Activated CD4-positive, alpha-beta T cell treated with anti-CD3 and anti-CD28 coated beads for 36 hours (primary cell): ENCODE measurements at regions of chr7 and their contacts with region 1.

Region 1: DNA sequence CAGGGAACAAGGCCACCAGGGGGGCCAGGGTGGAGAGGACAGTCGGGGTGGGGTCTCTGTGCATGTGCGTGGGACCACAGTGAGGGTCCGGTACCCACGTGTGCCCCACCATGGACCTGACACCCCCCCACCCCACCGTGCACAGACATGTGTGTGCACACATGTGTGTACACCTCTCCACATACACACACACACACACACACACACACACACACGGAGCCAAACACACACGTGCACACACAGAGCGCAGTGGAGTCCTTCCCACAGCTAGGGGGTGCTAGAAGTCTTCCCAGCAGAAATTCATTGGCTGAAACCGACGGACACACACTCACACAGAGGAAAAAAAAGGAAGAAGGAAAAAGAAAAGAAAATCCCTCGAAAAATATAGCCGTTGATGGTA is 42.8 kb upstream of the GNA12 start:
- DNase-seq: peak; percentile 81
- ATAC-seq: peak; percentile 91
- H3K4me3 Mint-ChIP-seq: no peak overlapping the region
- H3K27ac Mint-ChIP-seq: no peak overlapping the region
- H3K4me1 Mint-ChIP-seq: peaks cover 4% of the 10 kb centered on the region
- H3K27me3 Mint-ChIP-seq: no peaks in the 10 kb centered on the region

Region 2: GRCh38 chr7:3073763-3074458 is 187.0 kb after region 1 on chr7:
- CTCF ChIA-PET with region 1: no interaction called
- POLR2A ChIA-PET with region 1: no interaction called
- intact Hi-C with region 1: loop called in 1 of 2 experiments (anchors 5 kb)
- DNase-seq: no peak
- ATAC-seq: no peak
- H3K4me3 Mint-ChIP-seq: no peak overlapping the region
- H3K27ac Mint-ChIP-seq: no peak overlapping the region
- H3K4me1 Mint-ChIP-seq: peaks cover 16% of the 10 kb centered on the region
- H3K27me3 Mint-ChIP-seq: no peaks in the 10 kb centered on the region

Region 3: GRCh38 chr7:3154912-3155494 is 268.1 kb after region 1 on chr7:
- CTCF ChIA-PET with region 1: interaction called, 4 read pairs
- POLR2A ChIA-PET with region 1: no interaction called
- intact Hi-C with region 1: loop called (anchors 1 kb)
- DNase-seq: peak; percentile 80
- ATAC-seq: peak; percentile 72
- H3K4me3 Mint-ChIP-seq: no peak overlapping the region
- H3K27ac Mint-ChIP-seq: no peak overlapping the region
- H3K4me1 Mint-ChIP-seq: peaks cover 26% of the 10 kb centered on the region
- H3K27me3 Mint-ChIP-seq: peaks cover 2% of the 10 kb centered on the region

Region 4: GRCh38 chr7:3200504-3200903 is 313.6 kb after region 1 on chr7:
- CTCF ChIA-PET with region 1: no interaction called
- POLR2A ChIA-PET with region 1: no interaction called
- intact Hi-C with region 1: loop called in 1 of 2 experiments (anchors 1 kb)
- DNase-seq: peak; percentile 63
- ATAC-seq: peak; percentile 58
- H3K4me3 Mint-ChIP-seq: no peak overlapping the region
- H3K27ac Mint-ChIP-seq: no peak overlapping the region
- H3K4me1 Mint-ChIP-seq: no peaks in the 10 kb centered on the region
- H3K27me3 Mint-ChIP-seq: peaks cover 6% of the 10 kb centered on the region

Region 5: DNA sequence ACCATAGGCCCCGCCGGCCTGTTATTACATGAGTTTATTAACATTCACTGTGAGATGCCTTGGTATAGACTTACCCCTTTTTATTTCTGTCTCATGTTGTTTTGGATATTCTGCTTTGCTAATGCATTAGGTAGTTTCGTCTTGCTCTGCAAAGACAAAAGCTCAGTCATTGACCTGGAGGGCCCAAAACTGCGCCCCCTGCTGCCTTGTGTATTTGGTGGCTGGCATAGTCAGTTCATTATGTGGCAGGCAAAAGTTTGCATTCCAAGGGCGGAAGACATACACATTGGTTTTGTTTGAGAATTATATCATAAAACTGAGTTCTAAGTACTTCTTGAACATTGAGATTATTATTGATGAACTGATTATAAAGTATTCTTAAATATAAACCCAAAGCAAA is 786.6 kb after region 1 on chr7:
- CTCF ChIA-PET with region 1: no interaction called
- POLR2A ChIA-PET with region 1: no interaction called
- intact Hi-C with region 1: loop called in 1 of 2 experiments (anchors 5 kb)
- DNase-seq: peak; percentile 77
- ATAC-seq: no peak
- H3K4me3 Mint-ChIP-seq: no peak overlapping the region
- H3K27ac Mint-ChIP-seq: no peak overlapping the region
- H3K4me1 Mint-ChIP-seq: peaks cover 2% of the 10 kb centered on the region
- H3K27me3 Mint-ChIP-seq: no peaks in the 10 kb centered on the region